Naive thymus-derived CD4-positive, alpha-beta T cell (primary cell): ENCODE measurements at regions of chr11 and their contacts with region 1.

Region 1: GRCh38 chr11:125164422-125165110 is at the start of gene PKNOX2:
- DNase-seq: peak; percentile 30 to 70 (median 53)
- ATAC-seq: peak; percentile 80
- H3K4me3 ChIP-seq: peak within 1 kb of the TSS; percentile 63
- H3K4me3 Mint-ChIP-seq: peak within 1 kb of the TSS; percentile 88 to 97 (median 94)
- H3K27ac ChIP-seq: no peak within 1 kb of the TSS
- H3K27ac Mint-ChIP-seq: peak within 1 kb of the TSS in 7 of 9 donors; percentile 28 to 78 (median 61)
- H3K4me1 ChIP-seq: peaks cover 12 to 17% of the 10 kb centered on the region in 2 donors
- H3K4me1 Mint-ChIP-seq: peaks cover 15 to 23% (median 18%) of the 10 kb centered on the region in 7 donors
- H3K27me3 ChIP-seq: peaks cover 7 to 24% of the 10 kb centered on the region in 2 donors
- H3K27me3 Mint-ChIP-seq: peaks cover 42 to 84% (median 55%) of the 10 kb centered on the region in 5 donors
- total RNA-seq, gene PKNOX2: not detected

Region 2: DNA sequence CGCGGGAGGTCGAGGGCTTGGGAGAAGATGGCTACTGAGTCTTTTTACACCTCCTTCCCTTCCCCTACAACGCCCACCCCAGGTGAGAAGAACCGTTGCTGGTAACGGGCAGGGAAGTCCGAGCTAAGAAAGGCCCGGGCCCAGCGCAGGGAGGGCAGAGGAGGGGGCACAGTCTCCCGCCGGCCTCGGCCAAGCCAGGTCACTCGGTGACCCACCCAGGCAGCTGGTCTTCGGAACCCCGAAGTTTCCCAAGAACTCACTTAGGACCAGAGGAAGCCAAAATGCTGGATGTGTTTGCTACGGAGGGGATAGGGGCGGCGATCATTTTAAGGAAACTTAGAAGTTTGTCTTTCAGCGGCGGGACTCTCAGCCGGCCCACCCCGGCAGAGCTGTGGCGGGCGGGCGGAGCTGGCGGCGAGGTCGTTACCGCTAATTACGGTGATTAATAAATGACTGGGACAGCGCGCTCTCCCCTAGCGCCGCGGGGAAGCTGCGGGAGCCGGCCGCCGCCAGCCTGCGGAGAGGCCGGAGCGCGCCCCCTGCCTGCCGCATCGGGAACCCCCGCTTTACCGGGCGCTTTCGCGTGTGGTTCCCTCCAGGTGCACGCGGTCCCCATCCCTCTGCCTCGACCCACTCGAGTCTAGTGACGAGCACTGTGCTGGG is 298.5 kb before region 1 on chr11:
- CTCF ChIA-PET with region 1: no interaction called
- POLR2A ChIA-PET with region 1: no interaction called
- intact Hi-C with region 1: loop called in 1 of 2 experiments (anchors 5 kb)
- DNase-seq: peak in 8 of 9 donors; percentile 27 to 61 (median 46)
- ATAC-seq: peak; percentile 72
- H3K4me3 ChIP-seq: no peak overlapping the region
- H3K4me3 Mint-ChIP-seq: peak overlapping the region in 7 of 10 donors; percentile 37 to 68 (median 51)
- H3K27ac ChIP-seq: no peak overlapping the region
- H3K27ac Mint-ChIP-seq: peak overlapping the region in 1 of 9 donors; percentile 54
- H3K4me1 ChIP-seq: peaks cover 5 to 29% of the 10 kb centered on the region in 2 donors
- H3K4me1 Mint-ChIP-seq: peaks cover 7 to 67% (median 43%) of the 10 kb centered on the region in 7 donors
- H3K27me3 ChIP-seq: peaks cover 20 to 70% of the 10 kb centered on the region in 2 donors
- H3K27me3 Mint-ChIP-seq: peaks cover 80 to 97% (median 91%) of the 10 kb centered on the region in 5 donors

Region 3: GRCh38 chr11:125091877-125092664 is 72.5 kb before region 1 on chr11:
- CTCF ChIA-PET with region 1: no interaction called
- POLR2A ChIA-PET with region 1: no interaction called
- intact Hi-C with region 1: no loop called
- DNase-seq: no peak
- ATAC-seq: no peak
- H3K4me3 ChIP-seq: no peak overlapping the region
- H3K4me3 Mint-ChIP-seq: no peak overlapping the region
- H3K27ac ChIP-seq: no peak overlapping the region
- H3K27ac Mint-ChIP-seq: peak overlapping the region in 1 of 9 donors; percentile 21
- H3K4me1 ChIP-seq: no peaks in the 10 kb centered on the region
- H3K4me1 Mint-ChIP-seq: peaks cover 0 to 6% (median 0%) of the 10 kb centered on the region in 7 donors
- H3K27me3 ChIP-seq: no peaks in the 10 kb centered on the region
- H3K27me3 Mint-ChIP-seq: no peaks in the 10 kb centered on the region

Region 4: GRCh38 chr11:125180413-125181305 is 16.1 kb after region 1 on chr11:
- CTCF ChIA-PET with region 1: no interaction called
- POLR2A ChIA-PET with region 1: no interaction called
- intact Hi-C with region 1: no loop called
- DNase-seq: no peak
- ATAC-seq: no peak
- H3K4me3 ChIP-seq: no peak overlapping the region
- H3K4me3 Mint-ChIP-seq: no peak overlapping the region
- H3K27ac ChIP-seq: no peak overlapping the region
- H3K27ac Mint-ChIP-seq: no peak overlapping the region
- H3K4me1 ChIP-seq: no peaks in the 10 kb centered on the region
- H3K4me1 Mint-ChIP-seq: no peaks in the 10 kb centered on the region
- H3K27me3 ChIP-seq: no peaks in the 10 kb centered on the region
- H3K27me3 Mint-ChIP-seq: peaks cover 35 to 59% (median 36%) of the 10 kb centered on the region in 5 donors

Region 5: DNA sequence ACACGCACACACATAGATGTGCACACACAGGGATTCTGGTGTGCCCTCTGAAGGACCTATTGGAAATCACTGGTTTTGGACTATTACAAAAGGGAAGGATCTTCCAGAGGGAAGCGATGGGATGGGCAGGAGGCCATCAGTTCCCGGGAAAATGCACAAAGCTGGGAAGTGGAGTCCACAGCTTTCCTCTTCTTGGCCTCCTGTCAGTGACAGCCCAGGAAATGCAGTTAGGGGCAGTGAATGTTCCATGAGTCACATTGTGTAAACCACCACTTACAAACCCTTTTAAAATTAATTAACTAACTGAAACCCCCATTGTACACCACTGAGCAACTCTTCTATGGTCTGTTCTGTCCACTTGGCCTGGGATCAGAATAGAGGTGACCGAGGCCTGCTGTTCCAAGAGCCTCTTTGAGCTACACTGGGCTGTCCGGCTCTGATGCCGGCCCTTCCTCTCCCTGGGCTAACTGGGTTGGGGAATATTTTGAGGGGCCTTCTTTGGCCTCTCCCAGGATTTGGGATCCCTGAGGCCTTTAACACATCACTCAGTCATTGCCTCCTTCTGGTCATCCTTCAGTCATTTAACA is 193.8 kb after region 1 on chr11:
- CTCF ChIA-PET with region 1: no interaction called
- POLR2A ChIA-PET with region 1: no interaction called
- intact Hi-C with region 1: loop called in 1 of 2 experiments (anchors 2 kb)
- DNase-seq: no peak
- ATAC-seq: no peak
- H3K4me3 ChIP-seq: no peak overlapping the region
- H3K4me3 Mint-ChIP-seq: no peak overlapping the region
- H3K27ac ChIP-seq: no peak overlapping the region
- H3K27ac Mint-ChIP-seq: no peak overlapping the region
- H3K4me1 ChIP-seq: no peaks in the 10 kb centered on the region
- H3K4me1 Mint-ChIP-seq: peaks cover 0 to 6% (median 0%) of the 10 kb centered on the region in 7 donors
- H3K27me3 ChIP-seq: no peaks in the 10 kb centered on the region
- H3K27me3 Mint-ChIP-seq: peaks cover 0 to 4% (median 0%) of the 10 kb centered on the region in 5 donors

Region 6: DNA sequence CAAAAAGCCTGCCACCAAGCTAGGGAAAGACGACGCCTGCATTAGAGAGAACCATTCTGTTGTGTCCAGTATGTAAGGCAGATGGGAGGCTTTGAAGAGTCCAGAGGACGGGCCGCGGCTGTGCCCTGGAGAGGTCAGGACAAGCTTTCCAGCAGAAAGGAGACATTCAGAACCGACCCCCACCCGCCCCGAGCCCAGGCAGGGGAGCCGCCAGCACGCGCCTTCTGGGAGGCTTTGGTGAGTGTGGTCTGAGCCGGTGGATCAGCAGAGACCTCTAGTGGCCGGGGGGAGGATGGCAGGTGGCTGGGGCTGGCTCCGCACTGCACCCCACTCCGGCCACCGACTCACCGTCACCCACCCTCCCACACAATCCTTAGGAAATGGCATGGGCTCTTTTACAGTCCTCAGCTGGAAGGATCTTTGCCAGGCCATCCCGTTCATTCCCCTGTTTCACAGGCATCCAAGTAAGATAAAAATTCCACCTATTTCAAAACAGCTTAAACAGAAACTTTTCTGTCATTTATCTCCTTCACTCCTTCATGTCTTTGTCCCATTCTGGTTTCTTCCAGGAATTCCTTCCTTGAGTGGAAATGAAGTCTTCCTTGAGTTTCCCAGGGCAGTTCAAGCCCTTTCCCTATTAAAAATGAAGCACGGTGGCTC is 240.3 kb after region 1 on chr11:
- CTCF ChIA-PET with region 1: no interaction called
- POLR2A ChIA-PET with region 1: no interaction called
- intact Hi-C with region 1: loop called in 1 of 2 experiments (anchors 1 kb)
- DNase-seq: peak; percentile 15 to 75 (median 51)
- ATAC-seq: peak; percentile 91
- H3K4me3 ChIP-seq: no peak overlapping the region
- H3K4me3 Mint-ChIP-seq: peak overlapping the region in 6 of 10 donors; percentile 7 to 26 (median 20)
- H3K27ac ChIP-seq: no peak overlapping the region
- H3K27ac Mint-ChIP-seq: no peak overlapping the region
- H3K4me1 ChIP-seq: no peaks in the 10 kb centered on the region
- H3K4me1 Mint-ChIP-seq: peaks cover 0 to 10% (median 6%) of the 10 kb centered on the region in 7 donors
- H3K27me3 ChIP-seq: peaks cover 0 to 4% of the 10 kb centered on the region in 2 donors
- H3K27me3 Mint-ChIP-seq: peaks cover 41 to 67% (median 57%) of the 10 kb centered on the region in 5 donors